MCF 10A (cell line): ENCODE measurements at regions of chr20 and their contacts with region 1.

Region 1: DNA sequence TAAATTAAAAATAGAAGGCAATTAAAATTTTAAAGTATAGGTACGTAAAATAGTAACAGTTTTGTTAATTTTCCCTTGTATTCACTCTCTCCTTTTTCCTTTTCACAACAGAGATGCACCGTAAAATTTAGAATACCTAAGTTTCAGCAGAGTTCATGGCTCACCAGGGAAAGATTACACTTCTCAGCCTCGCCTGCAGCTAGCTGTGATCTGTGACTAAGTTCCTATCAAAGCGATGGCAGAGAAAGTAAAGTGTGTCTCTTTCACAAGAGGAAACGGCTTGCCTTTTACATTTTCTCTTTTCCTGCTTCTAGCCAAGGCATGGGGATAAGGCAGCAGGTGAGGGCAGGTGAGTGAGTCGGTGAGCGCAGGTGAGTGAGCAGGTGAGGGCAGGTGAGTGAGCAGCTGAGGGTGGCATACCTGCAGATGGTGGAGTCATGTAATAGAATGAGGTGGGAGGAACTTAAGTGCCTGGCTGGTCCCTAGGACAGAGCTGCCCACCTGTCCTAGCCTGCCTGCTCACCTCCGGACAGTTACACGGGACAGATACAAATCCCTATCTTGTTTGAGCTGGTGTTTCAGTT is 30.9 kb downstream of the ZFP64 start:
- DNase-seq: no peak
- H3K4me3 Mint-ChIP-seq: no peak overlapping the region
- H3K27ac Mint-ChIP-seq: no peak overlapping the region
- H3K4me1 Mint-ChIP-seq: no peaks in the 10 kb centered on the region
- H3K27me3 Mint-ChIP-seq: no peaks in the 10 kb centered on the region
- CTCF ChIP-seq: no peak

Region 2: DNA sequence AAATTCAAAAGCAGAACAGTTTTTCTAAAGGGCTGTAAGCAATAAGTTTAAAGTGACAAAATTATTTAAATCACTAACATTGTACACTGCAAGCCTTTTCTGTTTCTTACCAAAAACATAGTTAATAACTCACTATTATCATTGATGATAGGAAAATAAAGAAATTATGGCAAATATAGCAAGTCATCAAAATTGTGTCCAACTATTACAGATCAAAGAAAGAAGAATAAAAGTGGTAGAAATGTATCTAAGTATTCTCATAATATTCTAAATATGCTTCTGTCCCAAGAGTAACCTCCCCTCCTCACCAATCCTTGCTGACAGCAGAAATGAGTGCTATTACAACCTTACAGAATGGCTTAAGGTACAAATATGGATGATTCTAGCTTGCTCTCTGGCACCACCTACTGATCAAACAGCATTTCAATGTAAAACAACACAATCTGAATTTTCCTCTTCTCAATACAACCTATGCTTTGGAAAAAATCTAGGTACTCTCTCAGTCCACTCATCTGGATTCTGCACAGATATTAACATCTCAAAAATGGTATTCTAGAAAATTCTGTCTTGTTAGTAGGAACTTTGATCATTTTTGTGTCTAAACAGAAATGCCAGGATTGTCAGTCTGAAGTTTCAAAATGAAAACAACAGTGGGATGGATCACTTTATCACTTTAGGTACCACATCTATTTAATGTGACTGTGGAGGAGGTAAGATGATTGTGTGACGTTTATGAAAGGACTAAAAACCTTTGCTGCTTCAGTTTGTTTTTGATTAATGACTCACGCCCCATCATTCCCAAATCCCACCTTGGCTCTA is 10.1 kb before region 1 on chr20:
- CTCF ChIA-PET with region 1: interaction called, 28 read pairs
- POLR2A ChIA-PET with region 1: interaction called, 6 read pairs
- intact Hi-C with region 1: no loop called
- DNase-seq: peak; percentile 57
- H3K4me3 Mint-ChIP-seq: no peak overlapping the region
- H3K27ac Mint-ChIP-seq: no peak overlapping the region
- H3K4me1 Mint-ChIP-seq: no peaks in the 10 kb centered on the region
- H3K27me3 Mint-ChIP-seq: no peaks in the 10 kb centered on the region
- CTCF ChIP-seq: peak; percentile 68